Caco-2 (cell line): ENCODE measurements at regions of chr6 and their contacts with region 1.

Region 1: GRCh38 chr6:32127717-32128592 is at the start of gene ATF6B:
- DNase-seq: peak; percentile 96 to 99
- H3K4me3 ChIP-seq: peak within 1 kb of the TSS; percentile 75
- H3K4me3 Mint-ChIP-seq: peak within 1 kb of the TSS; percentile 99
- H3K27ac Mint-ChIP-seq: peak within 1 kb of the TSS; percentile 99
- H3K4me1 ChIP-seq: peaks cover 17% of the 10 kb centered on the region
- H3K4me1 Mint-ChIP-seq: peaks cover 26% of the 10 kb centered on the region
- H3K27me3 ChIP-seq: no peaks in the 10 kb centered on the region
- H3K27me3 Mint-ChIP-seq: no peaks in the 10 kb centered on the region
- CTCF ChIP-seq: no peak
- total RNA-seq, gene ATF6B: 61.5 and 64.9 TPM in 2 replicates

Region 2: DNA sequence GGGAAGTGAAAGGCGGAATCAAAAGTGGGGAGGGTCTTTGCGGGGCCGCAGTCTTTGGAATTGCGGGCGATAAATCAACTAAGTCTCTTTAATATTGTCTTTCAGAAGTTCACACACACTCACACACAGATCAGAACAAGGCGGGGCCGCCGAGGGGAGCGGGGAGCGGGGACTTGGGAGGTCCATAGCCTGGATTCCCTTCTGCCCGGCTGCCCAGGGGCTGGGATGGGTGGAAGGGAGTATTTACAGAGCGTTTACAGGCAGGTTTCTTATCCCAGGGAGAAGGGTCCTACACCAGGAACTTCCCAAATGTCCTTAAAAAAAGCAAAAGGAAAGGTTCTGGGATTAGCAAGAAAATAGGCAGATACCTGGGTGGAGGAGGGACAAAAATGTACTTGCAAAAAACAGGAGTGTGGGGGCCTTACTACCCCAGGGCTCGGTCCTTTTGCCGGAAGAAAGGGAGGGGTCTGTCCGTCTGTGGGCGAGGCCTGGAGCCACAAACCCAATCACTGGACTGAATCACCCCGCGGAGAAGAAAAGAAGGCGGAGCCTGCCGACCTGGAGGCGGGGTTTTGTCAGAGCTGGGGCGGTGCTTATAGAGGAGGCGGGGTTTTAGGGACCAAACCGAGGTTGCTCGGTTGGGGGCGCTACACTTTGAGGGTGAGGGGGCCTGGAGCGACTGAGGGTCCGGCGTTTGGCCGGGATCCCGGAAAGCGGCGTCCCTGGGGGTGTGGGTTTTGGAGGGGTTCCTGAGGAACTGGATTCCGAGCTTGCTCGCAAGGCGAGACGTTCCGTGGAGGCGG is 20.5 kb after region 1 on chr6:
- CTCF ChIA-PET with region 1: interaction called, 4 read pairs
- POLR2A ChIA-PET with region 1: interaction called, 8 read pairs
- intact Hi-C with region 1: loop called (anchors 1 kb)
- DNase-seq: no peak
- H3K4me3 ChIP-seq: no peak overlapping the region
- H3K4me3 Mint-ChIP-seq: no peak overlapping the region
- H3K27ac Mint-ChIP-seq: peak overlapping the region; percentile 81
- H3K4me1 ChIP-seq: peaks cover 55% of the 10 kb centered on the region
- H3K4me1 Mint-ChIP-seq: peaks cover 36% of the 10 kb centered on the region
- H3K27me3 ChIP-seq: no peaks in the 10 kb centered on the region
- H3K27me3 Mint-ChIP-seq: no peaks in the 10 kb centered on the region
- CTCF ChIP-seq: no peak